GM12878 (cell line): ENCODE measurements at regions of chr17 and their contacts with region 1.

Region 1: DNA sequence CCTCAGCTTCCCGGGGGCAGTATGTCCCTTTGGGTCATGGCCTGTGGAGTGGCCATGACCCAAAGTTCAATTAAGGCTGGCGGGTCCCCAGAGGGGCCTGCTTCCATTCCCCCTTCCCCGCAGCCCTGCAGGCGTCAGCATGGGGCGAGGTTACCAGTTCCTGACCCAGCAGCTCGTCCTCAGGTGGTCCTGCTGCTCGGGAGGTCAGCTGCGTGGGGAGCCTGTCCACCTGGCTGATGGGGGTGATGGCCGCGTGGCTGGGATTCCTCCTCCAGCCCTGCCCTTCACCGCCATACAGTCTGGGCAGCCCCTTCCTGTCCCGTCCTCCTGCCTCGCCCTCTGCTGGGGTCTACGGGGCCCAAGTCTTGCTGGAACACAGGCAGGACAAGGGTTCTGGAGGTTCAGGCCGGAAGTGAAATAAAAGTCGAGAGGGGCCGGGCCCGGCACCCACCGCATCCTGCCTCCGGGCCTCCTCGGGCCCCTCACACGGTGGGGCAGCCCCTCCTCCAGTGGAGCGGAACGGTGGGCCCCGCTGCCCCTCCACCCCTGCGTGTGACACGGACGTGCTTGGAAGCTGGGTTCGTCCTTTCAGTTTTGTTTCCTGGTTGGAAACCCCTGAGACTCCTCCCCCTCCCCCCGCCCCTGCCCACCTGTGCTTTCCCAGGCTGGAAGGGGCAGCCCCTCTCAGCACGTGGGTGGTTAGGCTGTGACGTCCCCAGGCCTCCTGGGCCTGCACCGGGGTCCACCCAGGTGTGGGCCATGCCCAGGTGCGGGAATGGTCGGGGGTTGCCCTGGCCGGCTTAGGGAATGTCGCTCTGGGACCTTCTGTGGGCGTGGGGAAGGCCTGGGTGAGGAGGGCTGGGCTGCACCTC is 6.8 kb downstream of the UBALD2 start:
- DNase-seq: peak; percentile 91
- ATAC-seq: peak; percentile 66
- H3K4me3 ChIP-seq: peak overlapping the region; percentile 85
- H3K27ac ChIP-seq: peak overlapping the region; percentile 99
- H3K4me1 ChIP-seq: peaks cover 48% of the 10 kb centered on the region
- H3K27me3 ChIP-seq: no peaks in the 10 kb centered on the region
- CTCF ChIP-seq: peak in 1 of 3 experiments; percentile 12; a peak in 1 of 6 replicates
- EP300 ChIP-seq: peak; percentile 73 to 76; a peak in 3 of 4 replicates
- POLR2A ChIP-seq: peak; percentile 91
- RAD21 ChIP-seq: 0 out of 2 replicates have a peak, but pooled peaks have one; percentile 14

Region 2: GRCh38 chr17:76223802-76224201 is 48.1 kb before region 1 on chr17:
- CTCF ChIA-PET with region 1: no interaction called
- POLR2A ChIA-PET with region 1: no interaction called
- RAD21 ChIA-PET with region 1: no interaction called
- SMC1A ChIA-PET with region 1: no interaction called
- in situ Hi-C with region 1: no loop called
- intact Hi-C with region 1: no loop called
- DNase-seq: no peak
- ATAC-seq: no peak
- H3K4me3 ChIP-seq: no peak overlapping the region
- H3K27ac ChIP-seq: no peak overlapping the region
- H3K4me1 ChIP-seq: no peaks in the 10 kb centered on the region
- H3K27me3 ChIP-seq: no peaks in the 10 kb centered on the region
- CTCF ChIP-seq: no peak
- EP300 ChIP-seq: no peak
- POLR2A ChIP-seq: no peak
- RAD21 ChIP-seq: no peak

Region 3: DNA sequence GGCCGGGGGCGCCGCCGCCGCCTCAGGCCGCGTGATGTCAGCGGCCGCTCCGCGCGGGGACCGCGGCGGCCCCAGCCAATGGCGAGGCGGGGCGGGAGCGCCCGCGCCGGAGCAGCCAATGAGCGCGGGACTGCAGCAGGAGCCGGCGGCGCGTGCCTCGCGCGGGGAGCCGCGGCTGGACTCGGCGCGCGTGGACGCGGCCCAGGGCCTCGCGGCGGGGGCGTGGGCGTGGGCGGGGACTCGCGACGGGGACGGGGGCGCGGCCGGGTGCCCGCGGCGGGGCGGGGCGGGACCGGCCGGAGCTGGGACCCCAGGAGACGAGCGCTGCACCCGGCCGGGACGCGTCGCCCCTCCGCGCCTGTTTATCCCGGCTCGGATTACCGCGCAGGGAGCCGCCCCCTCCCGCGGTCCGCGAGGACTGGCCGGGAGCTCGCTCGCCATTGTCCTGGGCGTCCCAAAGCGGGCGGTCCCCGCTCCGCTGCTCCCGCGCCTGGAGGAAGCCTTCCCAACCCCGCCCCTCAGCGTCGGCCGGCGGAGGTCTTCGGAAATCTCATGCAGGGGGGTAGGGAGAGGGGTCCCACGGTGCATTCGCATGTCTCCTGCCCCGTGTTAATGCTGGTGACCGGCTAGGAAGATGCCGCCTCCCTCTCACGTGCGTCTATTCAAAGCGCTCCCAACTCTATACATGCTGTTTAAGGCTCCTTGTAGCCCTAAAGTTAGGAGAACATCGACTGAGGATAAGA is 31.3 kb before region 1 on chr17 and contains the start of gene RNF157:
- CTCF ChIA-PET with region 1: interaction called, 6 read pairs
- POLR2A ChIA-PET with region 1: interaction called, 341 read pairs
- RAD21 ChIA-PET with region 1: interaction called, 89 read pairs
- SMC1A ChIA-PET with region 1: interaction called, 66 read pairs
- in situ Hi-C with region 1: no loop called
- intact Hi-C with region 1: no loop called
- DNase-seq: no peak
- ATAC-seq: peak; percentile 74
- H3K4me3 ChIP-seq: peak within 1 kb of the TSS; percentile 56; the same call in 1 of the 2 replicates
- H3K27ac ChIP-seq: no peak within 1 kb of the TSS
- H3K4me1 ChIP-seq: peaks cover 20% of the 10 kb centered on the region
- H3K27me3 ChIP-seq: peaks cover 0 to 3% of the 10 kb centered on the region in 2 experiments; a peak in 2 of 4 replicates
- CTCF ChIP-seq: no peak
- EP300 ChIP-seq: no peak
- POLR2A ChIP-seq: no peak
- RAD21 ChIP-seq: no peak
- polyA plus RNA-seq, gene RNF157: 5.2 to 9.5 TPM